ENCODE measurements at regions of chr6 and their contacts with region 1.

Region 1: DNA sequence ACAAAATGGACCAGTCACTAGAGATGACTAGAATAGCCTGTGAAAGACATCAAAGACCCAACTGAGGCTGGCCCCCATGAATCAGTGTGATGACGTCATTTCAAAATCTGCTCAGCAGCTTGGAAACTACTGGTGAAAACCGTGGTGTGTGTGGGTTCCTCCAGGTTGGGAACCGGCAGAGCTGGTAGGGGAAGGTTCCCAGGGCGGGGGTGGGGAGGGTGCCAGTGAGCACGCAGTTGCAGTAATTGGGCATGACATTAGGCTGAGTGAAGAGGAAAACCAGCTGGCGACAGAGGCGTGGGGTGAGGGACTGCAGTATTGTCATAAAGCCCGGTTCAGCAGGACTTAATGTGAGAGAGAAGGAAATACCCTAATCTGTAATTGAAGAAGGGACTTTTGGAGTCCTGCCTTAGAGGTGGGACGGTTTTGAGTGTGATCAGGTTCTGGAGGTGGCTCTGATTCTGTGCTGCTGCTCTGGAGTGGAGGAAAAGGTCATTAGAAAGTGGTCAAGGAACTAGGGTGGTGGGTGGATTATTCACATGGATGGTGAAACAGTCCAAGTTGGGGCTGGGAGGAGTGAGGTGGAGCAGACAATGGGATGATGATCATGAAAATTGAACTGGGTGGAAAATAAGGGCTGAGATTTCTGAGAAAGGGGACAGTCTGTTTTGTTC is 52.0 kb upstream of the MTHFD1L start:
- H3K4me3 Mint-ChIP-seq: no peak overlapping the region
- H3K27ac Mint-ChIP-seq: no peak overlapping the region
- H3K4me1 Mint-ChIP-seq: no peaks in the 10 kb centered on the region
- H3K27me3 Mint-ChIP-seq: peaks cover 18% of the 10 kb centered on the region

Region 2: DNA sequence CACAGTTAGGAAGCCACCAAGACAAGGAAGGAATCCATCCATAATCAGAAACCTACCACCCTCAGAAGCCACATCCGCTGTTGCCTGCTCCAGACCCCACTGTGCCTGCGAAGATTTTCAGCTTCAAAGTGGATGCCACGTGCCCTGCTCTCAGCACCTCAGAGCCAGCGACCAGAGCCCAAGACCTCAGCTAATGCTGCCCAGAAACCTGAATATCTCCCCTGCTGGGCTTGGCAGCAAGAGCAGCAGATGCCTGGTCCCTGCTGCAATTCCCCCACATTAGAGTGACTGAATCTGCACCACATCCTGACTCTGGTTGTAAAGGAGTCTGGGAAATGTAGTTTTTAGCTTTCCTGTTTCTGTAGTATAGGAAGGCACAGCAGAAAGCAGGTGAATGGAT is 733.9 kb before region 1 on chr6:
- intact Hi-C with region 1: loop called (anchors 2 kb)
- H3K4me3 Mint-ChIP-seq: no peak overlapping the region
- H3K27ac Mint-ChIP-seq: no peak overlapping the region
- H3K4me1 Mint-ChIP-seq: no peaks in the 10 kb centered on the region
- H3K27me3 Mint-ChIP-seq: peaks cover 25% of the 10 kb centered on the region

Region 3: DNA sequence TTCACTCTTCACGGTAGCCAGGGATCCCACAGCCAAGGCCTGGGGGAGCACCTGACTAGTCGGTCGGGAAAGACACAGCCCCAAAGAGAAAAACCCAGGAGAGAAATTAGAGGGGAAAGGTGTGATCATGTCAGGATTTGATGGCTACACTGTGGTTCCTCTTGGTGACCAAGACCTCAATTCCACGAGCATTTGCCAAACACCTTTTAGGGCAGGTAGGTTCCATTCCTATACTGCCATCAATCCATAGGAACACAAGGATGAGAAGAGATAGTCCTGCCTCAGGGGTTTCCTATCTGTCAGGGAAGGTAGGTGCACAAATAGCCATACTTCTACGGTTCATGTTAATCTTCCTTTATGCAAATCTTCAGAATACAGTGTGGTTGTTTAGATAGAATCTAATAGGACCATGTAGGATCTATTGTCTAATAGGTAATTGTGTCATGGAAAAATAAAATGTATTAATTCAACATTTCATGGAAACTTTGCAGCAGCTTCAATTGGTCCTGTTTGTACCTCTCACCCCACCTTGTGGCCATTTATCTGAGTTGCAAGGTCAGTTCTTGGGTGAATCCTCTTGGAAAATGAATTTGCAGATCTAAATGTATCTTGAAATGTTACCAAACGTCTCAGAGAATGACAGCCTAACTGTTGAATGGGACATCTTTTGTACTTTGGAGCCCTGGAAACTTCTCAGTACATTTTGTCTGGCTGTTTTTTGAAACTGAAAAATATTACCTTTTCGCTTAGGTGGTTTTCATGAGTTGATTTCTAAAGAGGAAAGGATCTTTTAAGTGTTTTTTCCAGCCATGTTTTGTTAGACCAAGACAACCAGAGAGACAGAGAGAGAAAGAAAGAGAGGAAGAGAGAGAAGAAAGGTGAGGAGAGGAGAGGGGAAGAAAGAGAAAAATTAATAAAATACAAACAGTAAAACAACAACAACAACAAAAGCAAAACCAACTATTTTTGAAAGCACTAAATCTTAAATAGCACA is 478.4 kb before region 1 on chr6:
- intact Hi-C with region 1: loop called (anchors 5 kb)
- H3K4me3 Mint-ChIP-seq: no peak overlapping the region
- H3K27ac Mint-ChIP-seq: no peak overlapping the region
- H3K4me1 Mint-ChIP-seq: no peaks in the 10 kb centered on the region
- H3K27me3 Mint-ChIP-seq: peaks cover 5% of the 10 kb centered on the region

Region 4: GRCh38 chr6:150417899-150418826 is 395.3 kb before region 1 on chr6:
- intact Hi-C with region 1: loop called (anchors 1 kb)
- H3K4me3 Mint-ChIP-seq: no peak overlapping the region
- H3K27ac Mint-ChIP-seq: no peak overlapping the region
- H3K4me1 Mint-ChIP-seq: peaks cover 17% of the 10 kb centered on the region
- H3K27me3 Mint-ChIP-seq: peaks cover 23% of the 10 kb centered on the region

Region 5: DNA sequence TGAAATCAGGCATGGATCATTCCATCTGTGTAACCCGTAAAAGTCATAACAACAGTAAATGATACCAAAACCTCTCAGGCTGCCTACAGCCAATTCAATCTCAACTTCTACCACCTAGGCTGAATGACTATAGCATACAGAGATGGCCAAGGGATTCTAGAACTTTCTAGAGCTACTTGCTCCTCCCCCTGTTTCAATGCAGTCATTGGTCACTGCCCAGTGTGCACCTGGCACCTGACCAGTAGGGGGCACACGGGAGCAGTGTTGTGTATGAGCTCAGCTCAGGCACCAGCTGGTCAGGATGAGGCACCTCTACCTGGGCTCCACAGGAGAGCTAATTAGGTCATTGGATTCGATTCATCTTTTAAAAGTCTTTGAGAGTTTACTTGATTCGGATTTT is 127.6 kb before region 1 on chr6:
- intact Hi-C with region 1: loop called (anchors 10 kb)
- H3K4me3 Mint-ChIP-seq: no peak overlapping the region
- H3K27ac Mint-ChIP-seq: no peak overlapping the region
- H3K4me1 Mint-ChIP-seq: peaks cover 16% of the 10 kb centered on the region
- H3K27me3 Mint-ChIP-seq: peaks cover 13% of the 10 kb centered on the region

Region 6: GRCh38 chr6:150775415-150776203 is 37.8 kb before region 1 on chr6:
- intact Hi-C with region 1: no loop called
- H3K4me3 Mint-ChIP-seq: no peak overlapping the region
- H3K27ac Mint-ChIP-seq: no peak overlapping the region
- H3K4me1 Mint-ChIP-seq: no peaks in the 10 kb centered on the region
- H3K27me3 Mint-ChIP-seq: no peaks in the 10 kb centered on the region

Measured in dendritic cell treated with granulocyte-macrophage colony-stimulating factor and Interleukin-4, amounts not matched to agents 40 ng/mL and 50 ng/mL, for 4 days (primary cell).